Calu3 (cell line): ENCODE measurements at regions of chr16 and their contacts with region 1.

Region 1: GRCh38 chr16:29315615-29316517 is 90.6 kb downstream of the NPIPB11 start:
- DNase-seq: peak; percentile 22
- H3K4me3 Mint-ChIP-seq: no peak overlapping the region
- H3K27ac Mint-ChIP-seq: no peak overlapping the region
- H3K4me1 Mint-ChIP-seq: no peaks in the 10 kb centered on the region
- H3K27me3 Mint-ChIP-seq: no peaks in the 10 kb centered on the region
- CTCF ChIP-seq: peak; percentile 25

Region 2: DNA sequence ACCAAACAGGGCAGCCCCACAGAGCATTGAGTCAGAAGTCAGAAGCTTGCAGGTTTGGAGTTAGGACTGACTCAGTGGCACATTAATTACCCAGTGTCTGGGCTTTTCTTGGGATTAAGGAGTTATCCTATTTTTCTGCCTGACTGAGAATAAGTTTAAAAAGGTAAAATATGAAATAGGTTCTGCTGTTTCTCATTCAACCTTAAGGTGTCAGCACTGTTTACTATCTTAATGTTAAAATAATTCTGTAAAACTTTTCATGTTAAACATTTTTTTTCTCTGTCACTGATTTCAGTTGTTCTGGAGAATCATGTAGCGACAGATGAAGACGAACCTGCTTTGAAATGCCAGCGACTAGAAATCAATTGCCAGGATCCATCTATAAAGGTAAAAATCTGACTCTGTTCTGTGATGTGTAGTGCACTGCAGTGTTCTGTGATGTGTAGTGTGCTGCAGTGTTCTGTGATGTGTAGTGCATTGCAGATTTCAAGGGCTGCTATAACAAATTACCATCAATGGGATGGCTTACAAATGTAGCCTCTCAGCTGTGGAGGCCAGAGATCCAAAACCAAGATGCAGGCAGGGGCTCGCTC is 203.0 kb before region 1 on chr16:
- CTCF ChIA-PET with region 1: no interaction called
- intact Hi-C with region 1: loop called (anchors 10 kb)
- DNase-seq: no peak
- H3K4me3 Mint-ChIP-seq: no peak overlapping the region
- H3K27ac Mint-ChIP-seq: no peak overlapping the region
- H3K4me1 Mint-ChIP-seq: peaks cover 12% of the 10 kb centered on the region
- H3K27me3 Mint-ChIP-seq: peaks cover 22% of the 10 kb centered on the region
- CTCF ChIP-seq: peak; percentile 31

Region 3: DNA sequence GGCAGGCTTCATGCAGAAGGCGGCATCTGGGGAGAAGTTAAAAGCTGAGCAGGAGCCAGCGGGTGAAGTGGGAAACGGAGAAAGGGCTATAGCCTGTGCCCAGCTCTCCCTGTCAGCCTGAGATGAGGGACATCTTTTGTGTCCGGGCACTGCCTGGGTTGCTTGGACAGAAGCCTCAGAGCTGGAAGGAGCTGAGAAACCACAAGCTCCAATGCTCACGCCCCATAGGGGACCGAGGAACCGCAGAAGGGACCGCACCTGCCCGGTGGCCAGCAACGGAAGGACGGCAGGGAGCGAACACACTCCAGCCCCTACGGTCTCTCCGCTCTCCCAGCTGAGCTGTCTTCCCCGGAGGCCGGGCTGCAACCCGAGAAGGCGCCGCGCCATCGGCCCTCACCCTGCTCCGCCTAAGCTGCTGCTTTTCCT is 85.2 kb before region 1 on chr16:
- CTCF ChIA-PET with region 1: no interaction called
- intact Hi-C with region 1: loop called (anchors 2 kb)
- DNase-seq: no peak
- H3K4me3 Mint-ChIP-seq: no peak overlapping the region
- H3K27ac Mint-ChIP-seq: no peak overlapping the region
- H3K4me1 Mint-ChIP-seq: peaks cover 8% of the 10 kb centered on the region
- H3K27me3 Mint-ChIP-seq: peaks cover 32% of the 10 kb centered on the region
- CTCF ChIP-seq: no peak